Common myeloid progenitor, CD34-positive (primary cell): ENCODE measurements at regions of chr12 and their contacts with region 1.

Region 1: GRCh38 chr12:92570056-92570753 is 132.6 kb upstream of the PLEKHG7 start:
- DNase-seq: peak; percentile 61 to 70 (median 68)
- H3K4me3 ChIP-seq: no peak overlapping the region
- H3K27ac ChIP-seq: no peak overlapping the region
- H3K4me1 ChIP-seq: peaks cover 0 to 3% (median 1%) of the 10 kb centered on the region in 4 experiments
- H3K27me3 ChIP-seq: no peaks in the 10 kb centered on the region

Region 2: DNA sequence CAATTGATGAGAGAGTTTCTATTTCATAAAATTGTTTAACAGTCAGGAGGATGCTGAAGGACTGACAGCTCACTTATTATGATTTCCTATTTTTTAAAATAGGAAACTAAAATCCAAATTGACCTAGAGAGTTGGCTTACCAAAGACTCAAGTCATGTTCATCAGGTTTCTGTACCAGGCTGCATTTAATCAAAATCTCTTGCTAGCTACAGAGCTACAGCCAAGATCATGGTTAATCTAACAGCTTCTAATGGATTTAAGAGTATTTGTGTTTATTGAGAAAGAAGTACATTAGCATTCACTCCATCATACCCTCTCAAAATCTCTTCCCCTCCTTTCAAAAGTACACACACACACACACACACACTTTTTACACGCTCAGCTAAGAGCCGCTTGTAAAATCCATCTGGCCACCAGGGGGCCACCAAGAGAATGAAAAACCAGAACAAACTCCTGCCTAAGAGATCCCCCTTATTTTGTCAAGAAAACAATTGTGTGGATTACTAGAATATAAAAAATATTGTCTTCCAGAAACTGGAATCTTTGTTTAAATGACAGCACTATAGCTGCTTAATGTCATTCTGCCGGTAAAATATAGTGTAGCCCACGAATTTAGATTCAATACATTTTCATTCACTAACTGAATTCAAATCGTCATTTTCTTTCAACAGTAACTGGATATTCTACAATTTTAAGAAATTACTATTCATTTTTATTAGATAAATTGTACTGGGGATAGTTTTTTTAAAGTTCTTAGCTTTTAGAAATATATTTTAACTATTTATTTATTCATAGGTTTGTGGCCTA is 758.5 kb before region 1 on chr12:
- CTCF ChIA-PET with region 1: interaction called, 24 read pairs
- POLR2A ChIA-PET with region 1: no interaction called
- DNase-seq: peak; percentile 66 to 78 (median 72)
- H3K4me3 ChIP-seq: no peak overlapping the region
- H3K27ac ChIP-seq: no peak overlapping the region
- H3K4me1 ChIP-seq: no peaks in the 10 kb centered on the region
- H3K27me3 ChIP-seq: no peaks in the 10 kb centered on the region

Region 3: GRCh38 chr12:92505254-92506231 is 64.7 kb before region 1 on chr12:
- CTCF ChIA-PET with region 1: interaction called, 53 read pairs
- POLR2A ChIA-PET with region 1: no interaction called
- DNase-seq: peak; percentile 44 to 79 (median 71)
- H3K4me3 ChIP-seq: peak overlapping the region in 6 of 7 experiments; percentile 13 to 60 (median 46)
- H3K27ac ChIP-seq: peak overlapping the region; percentile 46 to 71
- H3K4me1 ChIP-seq: peaks cover 6 to 17% (median 14%) of the 10 kb centered on the region in 4 experiments
- H3K27me3 ChIP-seq: no peaks in the 10 kb centered on the region